Posterior vena cava (tissue), 2 donors: ENCODE measurements at regions of chr10 and their contacts with region 1.

Region 1: DNA sequence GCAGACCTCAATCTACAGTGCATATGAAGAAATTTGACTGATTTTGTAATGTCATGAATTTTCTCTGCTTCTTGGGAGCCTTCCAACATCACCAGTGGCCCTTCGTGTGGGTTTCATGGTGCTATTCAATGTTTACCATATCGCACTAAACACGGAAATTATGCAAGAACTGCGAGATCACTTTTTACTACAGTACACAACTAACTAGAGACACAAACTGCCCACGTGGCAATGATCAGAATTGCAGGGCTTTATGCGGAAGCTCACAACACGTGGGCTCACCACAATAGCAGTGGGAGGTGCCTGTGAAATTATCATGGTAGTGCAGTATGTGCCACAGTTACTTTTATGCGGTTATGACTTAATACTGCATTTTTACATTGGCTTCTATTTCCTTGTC is 449.7 kb upstream of the KLF6 start:
- DNase-seq: no peak

Region 2: GRCh38 chr10:4131407-4132228 is 103.0 kb before region 1 on chr10:
- intact Hi-C with region 1: loop called in 1 of 2 experiments (anchors 10 kb)
- DNase-seq: no peak